Endothelial cell of umbilical vein (primary cell): ENCODE measurements at regions of chr3 and their contacts with region 1.

Region 1: GRCh38 chr3:194527726-194528125 is 40.9 kb upstream of the ATP13A3 start:
- DNase-seq: no peak
- H3K4me3 ChIP-seq: no peak overlapping the region
- H3K27ac ChIP-seq: peak overlapping the region; percentile 93
- H3K4me1 ChIP-seq: peaks cover 14% of the 10 kb centered on the region
- H3K27me3 ChIP-seq: no peaks in the 10 kb centered on the region
- CTCF ChIP-seq: no peak
- POLR2A ChIP-seq: no peak

Region 2: GRCh38 chr3:194486540-194487288 is 41.0 kb before region 1 on chr3 and contains the start of gene ATP13A3:
- CTCF ChIA-PET with region 1: interaction called, 5 read pairs
- POLR2A ChIA-PET with region 1: interaction called, 7 read pairs
- dilution Hi-C with region 1: no loop called
- intact Hi-C with region 1: loop called (anchors 1 kb)
- DNase-seq: peak; percentile 87
- H3K4me3 ChIP-seq: peak within 1 kb of the TSS; percentile 14 to 81 (median 72)
- H3K27ac ChIP-seq: peak within 1 kb of the TSS; percentile 62
- H3K4me1 ChIP-seq: peaks cover 28% of the 10 kb centered on the region
- H3K27me3 ChIP-seq: no peaks in the 10 kb centered on the region
- CTCF ChIP-seq: no peak
- POLR2A ChIP-seq: peak; percentile 81
- total RNA-seq, gene ATP13A3: 56.8 and 59.0 TPM in 2 replicates

Region 3: DNA sequence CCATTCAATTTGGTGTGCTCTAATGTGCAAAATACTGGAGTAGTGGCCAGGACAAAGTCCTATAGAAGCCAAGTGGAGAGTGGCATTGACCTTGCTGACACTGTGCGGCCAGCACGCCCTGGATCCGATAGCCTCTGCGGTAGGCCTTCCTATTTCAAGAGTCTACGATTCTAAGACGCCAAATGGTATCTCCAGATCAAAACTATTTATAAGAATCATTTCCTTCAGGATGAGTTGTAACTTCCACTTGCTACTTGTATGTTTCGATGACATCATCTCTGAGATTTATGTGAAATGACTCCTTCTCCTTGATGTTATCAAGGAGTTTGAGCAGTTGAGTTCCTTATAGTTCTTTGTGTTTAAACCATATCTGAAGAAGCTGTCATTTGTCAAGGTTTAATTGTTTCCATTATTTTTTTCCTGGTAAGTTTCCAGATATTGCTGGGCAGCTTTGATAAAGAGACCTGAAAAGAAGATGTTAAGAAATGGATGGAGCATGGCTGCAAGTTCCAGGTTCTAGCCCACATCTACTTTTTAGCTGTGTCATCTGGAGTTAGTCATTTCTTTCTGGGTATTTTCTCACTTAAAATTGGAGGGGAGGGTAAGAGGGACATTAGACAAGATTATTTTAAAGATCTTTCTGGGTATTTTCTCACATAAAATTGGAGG is 33.7 kb after region 1 on chr3:
- CTCF ChIA-PET with region 1: interaction called, 3 read pairs
- POLR2A ChIA-PET with region 1: no interaction called
- dilution Hi-C with region 1: no loop called
- intact Hi-C with region 1: loop called (anchors 1 kb)
- DNase-seq: peak; percentile 90
- H3K4me3 ChIP-seq: no peak overlapping the region
- H3K27ac ChIP-seq: peak overlapping the region; percentile 78
- H3K4me1 ChIP-seq: peaks cover 21% of the 10 kb centered on the region
- H3K27me3 ChIP-seq: peaks cover 5 to 9% of the 10 kb centered on the region in 2 experiments
- CTCF ChIP-seq: no peak
- POLR2A ChIP-seq: no peak

Region 4: DNA sequence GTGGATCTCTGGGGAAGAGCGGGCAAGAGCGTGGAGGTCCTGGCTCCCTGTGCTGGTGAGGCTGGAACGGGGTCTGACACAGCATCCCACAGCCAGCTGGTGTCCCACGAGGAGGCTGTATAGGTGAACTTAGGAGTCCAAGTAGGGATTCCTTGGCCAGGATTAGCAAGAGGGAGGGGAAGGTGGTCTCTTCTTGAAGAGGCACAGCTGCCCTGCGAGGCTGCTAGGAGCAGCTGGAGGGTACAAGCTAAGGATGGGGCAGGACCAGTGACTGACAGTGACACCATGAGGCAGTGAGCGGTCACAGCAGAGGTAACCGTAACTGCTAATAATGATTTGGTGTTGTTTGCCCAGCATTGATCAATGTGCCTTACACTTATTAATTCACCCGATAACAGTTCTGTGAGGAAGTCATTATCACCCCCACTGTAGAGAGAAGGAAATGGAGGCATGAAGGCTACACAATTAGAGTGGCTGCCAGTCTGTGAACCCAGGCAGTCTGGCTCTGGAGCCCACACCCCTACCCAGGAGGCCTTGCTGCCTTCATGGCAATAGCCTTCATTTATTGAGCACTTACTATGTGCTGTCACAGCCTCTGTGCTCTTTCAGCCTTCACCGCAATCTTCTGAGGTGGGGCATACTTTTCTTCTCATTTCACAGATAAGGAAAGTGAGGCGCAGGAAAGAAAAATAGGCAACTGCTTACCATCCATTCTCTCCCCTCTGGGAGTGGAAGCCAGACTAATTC is 46.1 kb after region 1 on chr3:
- CTCF ChIA-PET with region 1: interaction called, 5 read pairs
- POLR2A ChIA-PET with region 1: no interaction called
- dilution Hi-C with region 1: no loop called
- intact Hi-C with region 1: loop called (anchors 2 kb)
- DNase-seq: peak; percentile 54
- H3K4me3 ChIP-seq: no peak overlapping the region
- H3K27ac ChIP-seq: no peak overlapping the region
- H3K4me1 ChIP-seq: peaks cover 20% of the 10 kb centered on the region
- H3K27me3 ChIP-seq: no peaks in the 10 kb centered on the region
- CTCF ChIP-seq: peak; percentile 55 to 76
- POLR2A ChIP-seq: no peak

Region 5: DNA sequence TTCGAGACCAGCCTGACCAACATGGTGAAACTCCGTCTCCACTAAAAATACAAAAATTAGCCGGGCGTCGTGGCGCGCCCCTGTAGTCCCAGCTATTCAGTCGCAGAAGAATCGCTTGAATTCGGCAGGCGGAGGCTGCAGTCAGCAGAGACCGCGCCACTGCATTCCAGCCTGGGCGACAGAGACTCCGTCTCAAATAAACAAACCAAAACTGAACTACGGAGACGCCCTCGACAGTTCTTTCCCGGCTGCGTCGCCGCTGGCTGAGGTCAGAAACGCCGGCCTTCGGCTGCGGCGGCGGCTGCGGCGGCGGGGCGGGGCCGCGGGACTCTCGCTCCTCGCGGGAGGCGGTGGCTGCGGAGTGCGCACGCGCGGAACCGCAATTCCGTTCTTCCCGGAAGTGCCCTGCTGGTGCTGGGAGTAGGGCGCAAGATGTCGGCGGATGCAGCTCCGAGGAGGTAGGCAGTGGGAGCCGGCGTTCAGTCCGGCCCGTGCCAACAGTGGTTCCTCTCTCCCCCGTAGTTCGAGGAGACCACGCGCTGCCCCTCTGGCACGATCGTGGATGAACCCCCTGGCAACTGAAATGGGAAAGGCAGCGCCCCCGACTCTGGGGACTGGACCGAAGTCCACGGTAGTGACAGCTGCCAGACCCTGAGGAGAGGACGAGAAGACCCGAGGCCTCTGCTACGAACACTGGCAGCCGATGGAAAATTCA is 56.0 kb after region 1 on chr3:
- CTCF ChIA-PET with region 1: interaction called, 4 read pairs
- POLR2A ChIA-PET with region 1: interaction called, 6 read pairs
- dilution Hi-C with region 1: no loop called
- intact Hi-C with region 1: loop called (anchors 1 kb)
- DNase-seq: peak; percentile 95
- H3K4me3 ChIP-seq: peak overlapping the region; percentile 27 to 91 (median 61)
- H3K27ac ChIP-seq: peak overlapping the region; percentile 80
- H3K4me1 ChIP-seq: peaks cover 49% of the 10 kb centered on the region
- H3K27me3 ChIP-seq: no peaks in the 10 kb centered on the region
- CTCF ChIP-seq: no peak
- POLR2A ChIP-seq: peak; percentile 94